ENCODE measurements at regions of chr16 and their contacts with region 1.

Region 1: GRCh38 chr16:71461686-71462648 is at the start of gene ZNF23:
- DNase-seq: peak; percentile 86
- H3K4me3 ChIP-seq: peak within 1 kb of the TSS; percentile 92
- H3K27ac ChIP-seq: peak within 1 kb of the TSS; percentile 42
- H3K4me1 ChIP-seq: peaks cover 7% of the 10 kb centered on the region
- H3K27me3 ChIP-seq: no peaks in the 10 kb centered on the region
- CTCF ChIP-seq: no peak
- total RNA-seq, gene ZNF23: 5.8 to 6.4 TPM

Region 2: GRCh38 chr16:71311553-71312158 is 150.3 kb before region 1 on chr16:
- intact Hi-C with region 1: no loop called
- DNase-seq: no peak
- H3K4me3 ChIP-seq: no peak overlapping the region
- H3K27ac ChIP-seq: no peak overlapping the region
- H3K4me1 ChIP-seq: no peaks in the 10 kb centered on the region
- H3K27me3 ChIP-seq: no peaks in the 10 kb centered on the region
- CTCF ChIP-seq: peak; percentile 85

Region 3: DNA sequence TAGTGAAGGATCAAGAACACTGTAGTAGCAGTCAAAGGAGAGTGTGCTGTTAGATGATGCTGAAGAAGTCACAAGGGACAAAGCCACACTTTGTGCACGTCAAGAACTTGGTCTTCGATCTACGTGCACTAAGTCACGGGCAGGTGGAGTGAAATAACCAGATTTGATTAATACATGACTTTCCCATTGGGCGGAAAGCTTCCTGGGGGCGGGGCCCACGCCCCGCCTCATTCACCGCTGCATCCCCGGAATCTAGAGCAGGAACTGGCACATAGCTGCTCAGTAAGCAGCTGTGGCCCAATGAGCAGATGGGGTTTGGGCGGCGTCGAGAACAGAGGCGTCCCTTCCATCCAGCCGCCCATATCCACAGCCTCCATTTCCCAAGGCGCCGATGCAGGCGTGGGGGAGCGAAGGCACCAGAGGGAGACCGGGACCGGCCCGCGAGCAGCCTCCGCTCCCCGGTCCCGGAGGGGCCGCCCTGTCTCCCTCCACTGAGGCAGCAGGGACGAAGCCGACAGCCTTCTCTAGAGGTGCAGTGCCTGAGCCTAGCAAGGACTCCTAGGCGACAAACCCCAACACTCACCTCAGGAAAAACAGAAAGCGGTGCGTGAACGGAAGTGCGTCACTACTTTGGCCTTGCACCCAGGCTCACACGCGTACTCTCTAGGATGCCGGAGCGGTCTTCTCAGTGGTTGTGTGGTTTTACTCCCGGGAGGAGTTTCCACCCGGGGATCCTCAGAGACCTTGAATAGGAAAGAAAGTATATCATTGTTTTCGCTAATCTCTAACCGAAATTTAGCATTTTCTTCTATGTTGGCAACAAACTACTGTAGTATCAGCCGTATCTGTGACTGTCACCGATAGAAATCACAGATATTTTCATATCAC is 22.3 kb after region 1 on chr16:
- intact Hi-C with region 1: loop called (anchors 2 kb)
- DNase-seq: peak; percentile 91
- H3K4me3 ChIP-seq: peak overlapping the region; percentile 92
- H3K27ac ChIP-seq: peak overlapping the region; percentile 97
- H3K4me1 ChIP-seq: peaks cover 5% of the 10 kb centered on the region
- H3K27me3 ChIP-seq: no peaks in the 10 kb centered on the region
- CTCF ChIP-seq: no peak

Measured in colonic mucosa (tissue), 4 donors.